Mammary epithelial cell (primary cell): ENCODE measurements at regions of chr4 and their contacts with region 1.

Region 1: DNA sequence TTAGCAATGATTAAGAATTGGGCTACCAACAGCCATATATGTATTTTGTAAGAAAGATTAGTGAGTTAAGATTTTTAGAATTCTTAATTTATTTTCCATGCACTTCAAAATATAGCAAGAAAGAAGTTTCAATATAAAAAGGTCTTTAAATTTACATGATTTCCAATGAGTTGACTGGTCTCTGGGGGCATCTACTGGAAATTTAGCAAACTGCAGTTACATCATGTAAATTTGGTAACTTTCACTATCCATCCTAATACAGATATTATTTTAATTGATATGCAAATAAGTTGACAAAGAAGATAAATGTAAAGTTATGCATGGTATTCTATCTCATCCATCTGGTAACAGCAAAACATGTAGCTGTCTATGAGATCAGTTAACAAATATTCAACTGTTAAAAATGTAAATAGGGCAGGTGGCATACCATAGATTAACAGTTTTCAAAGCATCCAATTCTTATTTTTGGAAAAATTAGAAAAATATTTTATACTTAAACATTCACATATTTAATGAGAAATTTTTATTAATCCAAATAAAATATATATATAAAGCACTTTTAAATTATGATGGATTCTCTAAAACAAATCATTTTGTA is 29.1 kb downstream of the TTC29 start:
- DNase-seq: peak; percentile 3
- H3K4me3 ChIP-seq: no peak overlapping the region
- H3K27ac ChIP-seq: no peak overlapping the region
- H3K4me1 ChIP-seq: no peaks in the 10 kb centered on the region
- H3K27me3 ChIP-seq: peaks cover 1% of the 10 kb centered on the region
- CTCF ChIP-seq: peak; percentile 70 to 76

Region 2: DNA sequence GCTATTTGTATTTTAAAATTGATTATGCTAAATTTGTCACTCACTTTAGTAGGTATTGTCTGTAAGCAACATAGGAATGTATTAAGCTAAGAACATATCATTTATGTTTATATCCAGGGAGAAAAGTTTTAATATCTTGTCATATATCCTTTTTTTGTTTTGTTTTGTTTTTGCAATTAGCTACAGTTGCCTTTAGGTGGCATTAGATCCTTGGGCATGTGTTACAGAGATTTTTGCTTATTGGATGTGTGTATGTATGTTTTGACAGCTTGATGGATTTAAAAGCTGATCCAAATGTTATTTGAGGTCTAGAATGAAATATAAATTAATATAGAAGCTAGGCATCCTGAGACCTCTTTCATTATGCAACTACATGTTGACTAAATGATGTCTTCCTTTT is 1700.0 kb before region 1 on chr4:
- CTCF ChIA-PET with region 1: no interaction called
- dilution Hi-C with region 1: no loop called
- in situ Hi-C with region 1: loop called in 1 of 2 experiments (anchors 25 kb)
- intact Hi-C with region 1: loop called (anchors 10 kb)
- DNase-seq: peak; percentile 23
- H3K4me3 ChIP-seq: no peak overlapping the region
- H3K27ac ChIP-seq: no peak overlapping the region
- H3K4me1 ChIP-seq: no peaks in the 10 kb centered on the region
- H3K27me3 ChIP-seq: no peaks in the 10 kb centered on the region
- CTCF ChIP-seq: peak; percentile 53 to 67

Region 3: DNA sequence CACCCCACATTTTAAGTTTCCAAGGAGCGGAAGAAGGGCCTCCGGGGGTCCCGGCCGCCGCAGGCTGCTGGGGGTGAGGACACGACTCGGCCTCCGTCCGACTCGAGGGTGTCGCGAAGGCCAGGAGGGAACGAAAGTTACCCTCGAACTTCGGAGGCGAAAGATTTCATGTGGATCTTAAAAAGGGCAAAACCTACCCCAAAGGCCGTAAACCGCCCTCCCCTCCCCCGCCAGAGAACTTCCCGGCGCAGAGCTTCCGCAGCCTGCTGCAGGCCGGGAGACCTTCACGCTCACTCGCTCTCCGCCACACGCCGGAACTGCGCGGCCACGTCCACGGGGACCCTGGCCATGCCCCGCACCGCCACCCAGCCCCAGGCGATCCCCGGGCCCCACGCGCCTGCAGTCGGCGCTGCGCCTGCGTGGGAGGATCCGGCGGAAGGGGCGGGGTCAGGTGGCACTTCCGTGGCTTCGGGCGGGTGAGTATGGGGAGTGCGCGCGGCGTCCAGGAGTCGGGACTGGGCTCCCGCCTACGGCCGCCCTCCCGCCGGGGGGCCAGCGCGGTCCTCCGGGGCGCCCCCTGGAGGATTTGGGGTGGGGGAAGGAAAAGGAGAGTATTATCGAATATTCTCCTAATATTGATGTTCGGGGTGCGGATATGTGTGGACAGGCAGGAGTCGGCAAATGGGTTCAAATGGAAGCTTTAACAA is 1297.5 kb before region 1 on chr4 and contains the start of gene MMAA:
- CTCF ChIA-PET with region 1: no interaction called
- dilution Hi-C with region 1: no loop called
- in situ Hi-C with region 1: no loop called
- intact Hi-C with region 1: loop called (anchors 5 kb)
- DNase-seq: peak; percentile 87
- H3K4me3 ChIP-seq: peak within 1 kb of the TSS; percentile 71 to 100 (median 96)
- H3K27ac ChIP-seq: peak within 1 kb of the TSS; percentile 98
- H3K4me1 ChIP-seq: peaks cover 19% of the 10 kb centered on the region
- H3K27me3 ChIP-seq: no peaks in the 10 kb centered on the region
- CTCF ChIP-seq: peak; percentile 25 to 55
- total RNA-seq, gene MMAA: 5.3 to 8.4 TPM

Region 4: DNA sequence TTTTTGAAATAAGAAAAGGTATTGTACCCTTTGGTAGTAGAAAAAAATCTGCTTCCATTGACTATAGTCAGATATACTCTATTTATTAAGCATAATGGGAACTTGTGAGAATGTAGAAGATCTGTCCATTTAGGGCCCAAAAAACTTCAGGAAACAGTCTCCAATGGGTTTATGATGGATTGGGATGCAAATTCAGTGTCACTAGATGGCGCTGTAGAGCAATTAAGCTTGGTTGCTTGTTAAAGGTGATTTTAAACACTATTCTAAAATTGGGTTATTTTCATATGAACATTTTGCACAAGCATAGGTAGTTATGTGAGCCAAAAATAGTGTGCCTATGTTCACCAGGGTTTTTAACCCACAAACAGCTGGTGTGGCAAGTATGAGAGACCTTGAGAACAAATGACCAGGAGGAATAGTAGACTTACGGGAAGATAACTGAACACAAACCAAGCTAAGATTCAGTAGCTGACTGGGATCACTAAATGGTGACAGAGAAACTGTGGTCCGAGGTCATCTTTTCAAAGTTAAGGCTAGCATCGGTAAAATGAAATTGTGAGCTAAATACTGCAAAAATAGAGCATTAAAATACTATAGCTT is 821.4 kb before region 1 on chr4:
- CTCF ChIA-PET with region 1: no interaction called
- dilution Hi-C with region 1: no loop called
- in situ Hi-C with region 1: loop called in 1 of 2 experiments (anchors 25 kb)
- intact Hi-C with region 1: loop called (anchors 5 kb)
- DNase-seq: peak; percentile 35
- H3K4me3 ChIP-seq: no peak overlapping the region
- H3K27ac ChIP-seq: no peak overlapping the region
- H3K4me1 ChIP-seq: no peaks in the 10 kb centered on the region
- H3K27me3 ChIP-seq: no peaks in the 10 kb centered on the region
- CTCF ChIP-seq: peak; percentile 86 to 87

Region 5: DNA sequence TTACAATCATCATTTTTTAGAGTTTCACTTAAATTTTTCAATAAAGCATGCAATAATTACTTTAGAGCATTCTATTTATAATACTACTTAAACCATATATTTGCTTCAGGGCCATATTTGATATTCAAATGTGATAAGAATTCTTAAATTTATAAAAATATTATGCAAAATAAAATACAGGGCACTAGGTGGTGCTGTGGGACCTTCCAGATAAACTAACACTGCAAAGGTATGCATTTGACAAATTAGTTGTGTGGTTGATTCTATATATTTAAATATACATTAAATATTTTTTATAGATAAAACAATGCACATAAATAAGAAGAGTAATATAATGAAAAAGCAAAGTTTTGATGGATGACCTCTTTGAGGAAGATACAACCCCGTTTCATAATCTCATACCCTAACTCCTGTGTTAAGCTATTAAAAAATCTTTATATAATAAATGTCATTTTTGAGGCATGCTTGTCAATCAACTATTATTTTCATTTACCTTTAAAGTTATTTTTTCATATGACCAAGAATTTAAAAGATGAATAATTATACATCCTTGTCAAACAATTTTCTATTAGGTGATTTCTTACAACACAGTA is 573.9 kb before region 1 on chr4:
- CTCF ChIA-PET with region 1: no interaction called
- dilution Hi-C with region 1: no loop called
- in situ Hi-C with region 1: loop called (anchors 10 kb)
- intact Hi-C with region 1: loop called (anchors 1 kb)
- DNase-seq: no peak
- H3K4me3 ChIP-seq: no peak overlapping the region
- H3K27ac ChIP-seq: no peak overlapping the region
- H3K4me1 ChIP-seq: no peaks in the 10 kb centered on the region
- H3K27me3 ChIP-seq: no peaks in the 10 kb centered on the region
- CTCF ChIP-seq: peak; percentile 37 to 54

Region 6: GRCh38 chr4:146585761-146586333 is 330.7 kb before region 1 on chr4:
- CTCF ChIA-PET with region 1: no interaction called
- dilution Hi-C with region 1: no loop called
- in situ Hi-C with region 1: no loop called
- intact Hi-C with region 1: loop called (anchors 1 kb)
- DNase-seq: peak; percentile 15
- H3K4me3 ChIP-seq: no peak overlapping the region
- H3K27ac ChIP-seq: no peak overlapping the region
- H3K4me1 ChIP-seq: no peaks in the 10 kb centered on the region
- H3K27me3 ChIP-seq: no peaks in the 10 kb centered on the region
- CTCF ChIP-seq: no peak